Naive thymus-derived CD4-positive, alpha-beta T cell (primary cell): ENCODE measurements at regions of chr3 and their contacts with region 1.

Region 1: GRCh38 chr3:18389108-18389733 is 35.9 kb downstream of the SATB1 start:
- DNase-seq: peak in 7 of 9 donors; percentile 32 to 63 (median 53)
- ATAC-seq: peak; percentile 71
- H3K4me3 ChIP-seq: no peak overlapping the region
- H3K4me3 Mint-ChIP-seq: peak overlapping the region in 8 of 10 donors; percentile 4 to 58 (median 28)
- H3K27ac ChIP-seq: peak overlapping the region; percentile 17
- H3K27ac Mint-ChIP-seq: peak overlapping the region in 7 of 9 donors; percentile 2 to 79 (median 47)
- H3K4me1 ChIP-seq: peaks cover 0 to 41% of the 10 kb centered on the region in 2 donors
- H3K4me1 Mint-ChIP-seq: peaks cover 21 to 95% (median 88%) of the 10 kb centered on the region in 7 donors
- H3K27me3 ChIP-seq: no peaks in the 10 kb centered on the region
- H3K27me3 Mint-ChIP-seq: no peaks in the 10 kb centered on the region

Region 2: DNA sequence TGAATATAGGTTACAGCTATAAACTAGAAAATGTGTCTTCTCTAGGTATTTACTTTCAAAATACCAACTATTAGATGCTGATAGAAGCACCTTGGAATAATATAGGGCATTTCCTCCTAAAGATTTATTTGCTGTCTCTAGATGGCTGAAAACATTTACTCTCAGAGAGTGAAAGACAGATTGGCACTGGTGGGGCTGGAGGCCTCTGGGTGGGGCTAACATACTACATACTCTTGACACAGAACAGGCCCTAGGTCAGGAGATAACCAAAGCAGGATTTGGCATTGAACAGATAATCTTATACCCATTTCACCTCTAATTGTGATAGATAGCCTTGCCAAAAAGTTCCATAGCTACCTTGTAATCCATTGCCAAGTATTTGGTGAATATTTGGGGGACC is 393.5 kb before region 1 on chr3:
- CTCF ChIA-PET with region 1: no interaction called
- POLR2A ChIA-PET with region 1: no interaction called
- intact Hi-C with region 1: loop called in 1 of 2 experiments (anchors 10 kb)
- DNase-seq: no peak
- ATAC-seq: no peak
- H3K4me3 ChIP-seq: no peak overlapping the region
- H3K4me3 Mint-ChIP-seq: no peak overlapping the region
- H3K27ac ChIP-seq: no peak overlapping the region
- H3K27ac Mint-ChIP-seq: no peak overlapping the region
- H3K4me1 ChIP-seq: no peaks in the 10 kb centered on the region
- H3K4me1 Mint-ChIP-seq: no peaks in the 10 kb centered on the region
- H3K27me3 ChIP-seq: no peaks in the 10 kb centered on the region
- H3K27me3 Mint-ChIP-seq: peaks cover 0 to 2% (median 0%) of the 10 kb centered on the region in 5 donors

Region 3: DNA sequence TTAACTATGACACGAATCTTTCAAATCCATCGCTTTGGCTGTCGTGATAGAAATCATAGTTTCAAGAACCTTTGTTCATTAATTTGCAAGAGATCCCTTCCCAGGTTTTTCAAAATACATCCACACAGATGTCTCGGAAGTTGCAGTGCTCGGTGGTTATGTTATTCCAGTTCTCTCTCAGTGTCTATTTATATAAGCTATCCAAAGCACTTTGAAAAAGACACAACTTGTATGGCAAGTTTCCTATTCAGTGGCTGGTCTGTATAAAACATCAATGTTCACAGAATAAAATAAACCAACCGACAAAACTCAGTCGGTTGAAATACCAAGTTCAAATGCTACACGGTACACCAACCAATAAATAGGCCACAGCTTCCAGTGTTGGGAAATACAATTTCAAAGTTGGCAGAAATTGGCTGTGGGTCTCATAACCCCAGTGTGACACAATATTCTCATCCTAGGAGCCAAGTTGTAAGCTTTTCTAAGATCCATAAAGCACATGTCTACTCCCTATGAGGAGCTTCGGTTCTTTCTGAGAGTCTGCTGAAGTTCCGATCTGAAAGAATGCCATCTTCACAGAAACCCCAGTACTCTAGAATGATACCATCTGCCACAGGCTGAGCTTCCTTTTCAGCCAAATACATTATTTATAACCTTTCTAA is 12.2 kb after region 1 on chr3:
- CTCF ChIA-PET with region 1: interaction called, 6 read pairs
- POLR2A ChIA-PET with region 1: interaction called, 16 read pairs
- intact Hi-C with region 1: loop called in 1 of 2 experiments (anchors 1 kb)
- DNase-seq: no peak
- ATAC-seq: peak; percentile 53
- H3K4me3 ChIP-seq: peak overlapping the region; percentile 3
- H3K4me3 Mint-ChIP-seq: peak overlapping the region; percentile 35 to 85 (median 80)
- H3K27ac ChIP-seq: peak overlapping the region; percentile 64
- H3K27ac Mint-ChIP-seq: peak overlapping the region; percentile 78 to 96 (median 87)
- H3K4me1 ChIP-seq: peaks cover 0 to 92% of the 10 kb centered on the region in 2 donors
- H3K4me1 Mint-ChIP-seq: peaks cover 51 to 100% (median 100%) of the 10 kb centered on the region in 7 donors
- H3K27me3 ChIP-seq: no peaks in the 10 kb centered on the region
- H3K27me3 Mint-ChIP-seq: no peaks in the 10 kb centered on the region

Region 4: GRCh38 chr3:18419232-18419631 is 30.0 kb after region 1 on chr3:
- CTCF ChIA-PET with region 1: interaction called, 4 read pairs
- POLR2A ChIA-PET with region 1: interaction called, 10 read pairs
- intact Hi-C with region 1: loop called in 1 of 2 experiments (anchors 2 kb)
- DNase-seq: no peak
- ATAC-seq: no peak
- H3K4me3 ChIP-seq: peak overlapping the region; percentile 0
- H3K4me3 Mint-ChIP-seq: peak overlapping the region in 9 of 10 donors; percentile 83 to 100 (median 96)
- H3K27ac ChIP-seq: peak overlapping the region; percentile 97
- H3K27ac Mint-ChIP-seq: peak overlapping the region; percentile 85 to 96 (median 92)
- H3K4me1 ChIP-seq: peaks cover 13 to 53% of the 10 kb centered on the region in 2 donors
- H3K4me1 Mint-ChIP-seq: peaks cover 45 to 91% (median 80%) of the 10 kb centered on the region in 7 donors
- H3K27me3 ChIP-seq: no peaks in the 10 kb centered on the region
- H3K27me3 Mint-ChIP-seq: no peaks in the 10 kb centered on the region

Region 5: DNA sequence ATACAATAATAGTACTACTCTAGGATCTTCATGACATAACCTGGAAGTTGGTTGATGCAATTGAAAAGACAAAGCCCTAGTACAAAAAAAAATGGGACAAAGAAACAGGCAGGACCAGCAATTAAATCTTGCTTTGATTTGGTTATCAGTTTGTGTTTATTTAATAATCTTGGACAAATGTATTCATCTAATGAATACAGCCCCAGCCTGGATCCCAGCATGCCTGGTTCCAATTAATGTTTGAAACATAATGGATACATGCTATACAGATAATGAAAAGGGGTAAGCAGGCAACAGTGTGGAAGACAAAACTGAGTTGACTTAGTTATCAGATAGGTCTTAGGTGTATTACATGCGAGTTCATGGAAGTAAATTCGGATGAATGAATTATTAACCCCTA is 65.5 kb after region 1 on chr3:
- CTCF ChIA-PET with region 1: no interaction called
- POLR2A ChIA-PET with region 1: no interaction called
- intact Hi-C with region 1: no loop called
- DNase-seq: no peak
- ATAC-seq: no peak
- H3K4me3 ChIP-seq: no peak overlapping the region
- H3K4me3 Mint-ChIP-seq: peak overlapping the region in 1 of 10 donors; percentile 5
- H3K27ac ChIP-seq: no peak overlapping the region
- H3K27ac Mint-ChIP-seq: peak overlapping the region in 1 of 9 donors; percentile 18
- H3K4me1 ChIP-seq: peaks cover 0 to 10% of the 10 kb centered on the region in 2 donors
- H3K4me1 Mint-ChIP-seq: peaks cover 14 to 93% (median 80%) of the 10 kb centered on the region in 7 donors
- H3K27me3 ChIP-seq: no peaks in the 10 kb centered on the region
- H3K27me3 Mint-ChIP-seq: no peaks in the 10 kb centered on the region